Heart left ventricle (tissue), 16 donors: ENCODE measurements at regions of chrX and their contacts with region 1.

Region 1: DNA sequence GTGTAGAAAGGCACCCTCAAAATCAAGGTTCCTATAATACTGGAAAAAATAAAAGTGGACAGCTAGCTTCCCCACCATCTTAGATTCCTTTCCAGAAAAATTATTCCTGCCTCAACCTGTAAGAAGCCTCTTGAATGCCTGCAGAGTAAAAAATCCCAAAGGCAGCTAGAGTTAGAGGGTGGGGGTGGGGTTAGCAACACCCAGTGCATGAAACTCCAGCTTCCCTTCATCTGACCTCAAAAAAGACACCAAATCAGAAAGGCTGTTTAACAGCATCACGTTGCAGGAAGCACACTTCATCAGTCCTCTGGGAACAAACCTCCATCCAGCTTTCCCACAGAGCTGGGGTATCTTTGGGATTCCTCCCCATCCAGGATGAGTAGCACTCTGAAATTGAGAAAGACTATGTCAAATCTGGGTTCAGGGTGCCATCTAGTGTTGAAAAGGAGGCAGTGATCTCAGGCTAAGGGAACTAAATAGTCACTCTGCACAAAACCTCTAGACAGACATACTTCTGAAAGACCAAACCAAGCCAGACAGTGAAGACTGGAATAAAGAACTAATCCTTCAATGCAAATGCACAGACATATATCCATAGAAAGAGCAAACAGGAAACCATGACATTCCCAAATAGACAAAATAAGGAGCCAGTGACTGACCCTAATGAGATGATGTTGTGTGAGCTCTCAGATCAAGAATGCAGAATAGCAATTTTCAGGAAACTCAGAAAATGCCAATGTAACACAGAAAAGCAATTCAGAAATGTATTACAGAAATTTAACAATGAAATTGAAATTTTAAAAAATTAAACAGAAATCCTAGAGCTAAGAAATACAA is 97.9 kb downstream of the ARHGEF9 start:
- DNase-seq: peak in 1 of 5 donors; percentile 5
- ATAC-seq: peak in 3 of 4 donors; percentile 44 to 58 (median 53)
- H3K4me3 ChIP-seq: no peak overlapping the region
- H3K27ac ChIP-seq: no peak overlapping the region
- H3K4me1 ChIP-seq: no peaks in the 10 kb centered on the region
- H3K27me3 ChIP-seq: peaks cover 0 to 7% (median 0%) of the 10 kb centered on the region in 9 donors
- CTCF ChIP-seq: peak; percentile 32 to 61 (median 46)
- POLR2A ChIP-seq: no peak

Region 2: DNA sequence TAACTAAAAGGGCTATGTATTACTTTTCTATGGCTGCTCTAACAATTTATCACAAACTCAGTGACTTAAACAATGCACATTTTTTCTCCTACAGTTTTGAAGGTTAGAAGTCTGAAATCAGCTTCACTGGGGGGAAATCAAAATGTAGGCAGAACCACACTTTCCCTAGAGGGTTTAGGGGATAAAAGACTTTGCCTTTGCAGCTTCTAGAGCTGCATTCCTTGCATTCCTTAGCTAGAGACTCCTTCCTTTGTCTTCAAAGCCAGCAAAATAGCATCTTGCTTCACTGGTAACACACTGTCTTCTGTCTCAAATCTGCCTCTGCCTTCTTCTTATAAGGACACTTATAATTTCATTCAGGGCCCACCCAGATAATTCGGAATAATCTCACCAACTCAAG is 183.6 kb before region 1 on chrX:
- intact Hi-C with region 1: no loop called
- DNase-seq: no peak
- ATAC-seq: no peak
- H3K4me3 ChIP-seq: no peak overlapping the region
- H3K27ac ChIP-seq: no peak overlapping the region
- H3K4me1 ChIP-seq: no peaks in the 10 kb centered on the region
- H3K27me3 ChIP-seq: no peaks in the 10 kb centered on the region
- CTCF ChIP-seq: no peak
- POLR2A ChIP-seq: no peak

Region 3: DNA sequence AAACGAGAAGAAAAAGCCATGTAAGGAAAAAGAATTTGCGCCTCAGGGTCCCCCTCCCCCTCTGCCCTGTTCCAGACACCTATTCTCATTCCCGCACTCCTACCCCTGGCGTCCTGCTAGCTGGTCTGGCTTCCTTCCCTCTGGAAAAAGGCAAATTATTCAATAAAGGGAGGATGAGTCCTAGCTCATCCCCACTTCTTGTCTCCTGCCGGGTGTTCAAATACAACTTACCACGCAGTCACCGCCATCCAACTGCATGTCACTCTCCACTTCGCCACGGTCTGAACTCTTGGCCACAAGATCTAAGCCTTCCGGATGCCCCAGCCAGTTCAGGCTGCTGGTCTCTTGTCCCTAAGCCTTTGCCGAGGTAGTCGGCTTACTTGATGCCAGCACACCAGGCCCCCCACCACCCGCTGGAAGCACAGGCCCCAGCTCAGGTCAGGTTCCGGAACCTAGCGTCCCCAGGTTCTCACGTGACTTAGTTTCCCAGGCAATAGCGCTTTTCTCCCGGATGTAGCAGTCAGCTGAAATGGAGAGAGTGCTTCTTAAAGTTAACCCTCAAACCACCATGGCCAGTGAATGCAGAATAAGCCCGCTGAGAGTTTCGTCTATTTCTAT is 126.4 kb before region 1 on chrX:
- intact Hi-C with region 1: no loop called
- DNase-seq: peak; percentile 37 to 61 (median 57)
- ATAC-seq: peak; percentile 91 to 99 (median 98)
- H3K4me3 ChIP-seq: peak overlapping the region; percentile 9 to 81 (median 66)
- H3K27ac ChIP-seq: peak overlapping the region in 11 of 12 donors; percentile 9 to 77 (median 65)
- H3K4me1 ChIP-seq: peaks cover 0 to 14% (median 0%) of the 10 kb centered on the region in 12 donors
- H3K27me3 ChIP-seq: no peaks in the 10 kb centered on the region
- CTCF ChIP-seq: no peak
- POLR2A ChIP-seq: no peak

Region 4: DNA sequence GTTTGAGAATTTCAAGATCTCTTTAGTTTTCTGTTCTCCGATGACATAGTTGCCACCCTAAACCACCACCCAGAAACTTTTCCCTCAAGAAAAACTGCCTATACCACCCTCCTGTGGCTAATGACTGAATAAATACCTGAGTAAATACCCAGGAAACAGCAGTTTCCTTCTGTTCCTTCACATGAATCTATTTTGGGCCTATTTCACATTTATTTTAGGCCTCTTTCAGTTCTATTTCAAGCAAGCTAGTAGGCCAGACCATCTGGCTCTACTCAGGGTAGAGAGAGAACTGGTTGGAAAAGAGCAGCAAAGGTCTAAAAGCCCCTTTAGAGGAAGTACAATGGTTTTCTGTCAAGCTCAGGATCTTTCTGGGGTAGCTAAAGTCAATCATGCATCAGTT is 74.5 kb after region 1 on chrX:
- intact Hi-C with region 1: loop called in 1 of 10 experiments (anchors 10 kb)
- DNase-seq: no peak
- ATAC-seq: peak in 1 of 4 donors; percentile 30
- H3K4me3 ChIP-seq: no peak overlapping the region
- H3K27ac ChIP-seq: peak overlapping the region in 1 of 12 donors; percentile 7
- H3K4me1 ChIP-seq: peaks cover 0 to 5% (median 0%) of the 10 kb centered on the region in 12 donors
- H3K27me3 ChIP-seq: peaks cover 0 to 7% (median 0%) of the 10 kb centered on the region in 9 donors
- CTCF ChIP-seq: peak in 4 of 12 donors; percentile 15 to 33 (median 26)
- POLR2A ChIP-seq: no peak